ENCODE measurements at regions of chr7 and their contacts with region 1.

Region 1: DNA sequence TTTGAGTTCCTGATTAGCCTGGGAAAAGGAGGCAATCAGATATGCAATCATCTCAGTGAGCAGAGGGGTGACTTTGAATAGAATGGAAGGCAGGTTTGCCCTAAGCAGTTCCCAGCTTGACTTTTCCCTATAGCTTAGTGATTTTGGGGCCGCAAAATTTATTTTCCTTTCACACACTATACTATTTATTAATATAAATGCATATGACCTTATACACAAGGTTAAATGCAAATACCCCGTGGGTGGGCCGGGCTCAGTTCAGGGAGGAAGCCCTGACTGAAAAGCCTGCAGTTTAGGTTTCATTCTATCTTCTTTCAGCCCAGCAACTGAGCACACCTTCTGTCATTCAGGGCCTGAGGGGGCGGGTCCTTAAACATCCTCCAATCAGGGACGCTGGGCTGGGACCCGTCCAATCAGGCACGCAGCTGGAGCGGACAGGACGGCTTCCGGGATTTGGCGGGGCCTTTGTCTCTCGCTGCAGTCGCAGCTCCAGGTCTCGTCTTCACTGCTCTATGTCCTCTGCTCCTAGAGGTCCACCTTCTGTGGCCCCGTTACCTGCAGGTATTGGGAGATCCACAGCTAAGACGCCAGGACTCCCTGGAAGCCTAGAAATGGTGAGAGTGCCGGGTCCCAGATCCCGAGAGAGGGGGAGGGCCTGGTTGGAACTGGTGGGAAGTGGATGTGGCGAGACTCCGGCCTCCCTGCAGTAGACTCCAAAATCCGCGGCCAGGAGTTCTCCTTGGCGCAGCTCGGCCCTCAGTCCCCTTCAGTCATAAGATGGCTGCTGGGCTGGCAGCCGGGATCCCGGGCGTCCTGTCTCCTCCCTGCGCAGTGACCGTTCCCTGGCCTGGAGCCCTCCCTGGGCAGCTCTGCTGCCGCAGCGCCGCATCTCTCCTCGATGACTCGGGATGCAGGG is at the start of gene ZNF273:
- DNase-seq: peak; percentile 72
- ATAC-seq: peak; percentile 100
- H3K4me3 Mint-ChIP-seq: peak within 1 kb of the TSS; percentile 97
- H3K27ac Mint-ChIP-seq: peak within 1 kb of the TSS; percentile 91
- H3K4me1 Mint-ChIP-seq: peaks cover 52% of the 10 kb centered on the region
- H3K27me3 Mint-ChIP-seq: no peaks in the 10 kb centered on the region
- CTCF ChIP-seq: no peak
- total RNA-seq, gene ZNF273: 10.6 and 12.3 TPM in 2 replicates

Region 2: GRCh38 chr7:63900394-63901203 is 1002.5 kb before region 1 on chr7:
- CTCF ChIA-PET with region 1: no interaction called
- POLR2A ChIA-PET with region 1: no interaction called
- intact Hi-C with region 1: loop called (anchors 1 kb)
- DNase-seq: peak; percentile 61
- ATAC-seq: peak; percentile 92
- H3K4me3 Mint-ChIP-seq: peak overlapping the region; percentile 96
- H3K27ac Mint-ChIP-seq: peak overlapping the region; percentile 95
- H3K4me1 Mint-ChIP-seq: peaks cover 2% of the 10 kb centered on the region
- H3K27me3 Mint-ChIP-seq: no peaks in the 10 kb centered on the region
- CTCF ChIP-seq: no peak

Region 3: DNA sequence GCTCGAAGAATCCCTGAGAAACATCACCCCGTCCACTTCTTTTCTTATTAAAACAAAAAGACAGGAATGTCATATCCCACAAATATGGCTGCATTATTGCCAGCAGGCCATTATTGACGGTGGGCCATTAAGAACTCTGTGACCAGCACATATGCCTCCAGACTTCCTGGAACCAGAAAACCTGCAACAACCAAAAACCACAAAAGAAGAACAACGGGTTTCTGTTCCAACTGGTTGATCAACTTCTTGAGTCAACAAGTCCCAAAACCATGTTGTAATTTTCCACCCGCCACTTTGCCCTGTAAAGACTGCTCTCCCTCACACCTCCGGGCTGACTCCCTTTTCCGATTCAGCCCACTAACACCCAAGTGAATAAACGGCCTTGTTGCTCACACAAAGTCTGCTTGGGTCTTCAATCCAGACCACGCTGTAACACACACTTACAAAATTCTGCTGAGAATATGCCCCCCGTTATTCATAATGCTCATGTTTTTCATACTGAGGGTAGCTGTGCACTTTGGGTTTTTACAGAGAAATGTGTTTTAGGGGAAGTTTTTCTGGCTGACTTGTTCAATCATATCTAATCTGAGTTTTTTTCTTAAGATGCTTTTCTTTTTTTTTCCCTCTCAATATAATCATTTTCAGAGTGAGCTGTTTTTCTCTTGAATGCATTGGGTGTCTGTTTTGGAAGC is 216.4 kb before region 1 on chr7:
- CTCF ChIA-PET with region 1: no interaction called
- POLR2A ChIA-PET with region 1: no interaction called
- intact Hi-C with region 1: loop called (anchors 5 kb)
- DNase-seq: peak; percentile 29
- ATAC-seq: peak; percentile 84
- H3K4me3 Mint-ChIP-seq: peak overlapping the region; percentile 79
- H3K27ac Mint-ChIP-seq: peak overlapping the region; percentile 99
- H3K4me1 Mint-ChIP-seq: peaks cover 70% of the 10 kb centered on the region
- H3K27me3 Mint-ChIP-seq: no peaks in the 10 kb centered on the region
- CTCF ChIP-seq: no peak

Region 4: GRCh38 chr7:64887756-64888508 is 15.1 kb before region 1 on chr7:
- CTCF ChIA-PET with region 1: interaction called, 3 read pairs
- POLR2A ChIA-PET with region 1: interaction called, 4 read pairs
- intact Hi-C with region 1: loop called (anchors 1 kb)
- DNase-seq: peak; percentile 33
- ATAC-seq: peak; percentile 72
- H3K4me3 Mint-ChIP-seq: peak overlapping the region; percentile 86
- H3K27ac Mint-ChIP-seq: no peak overlapping the region
- H3K4me1 Mint-ChIP-seq: peaks cover 13% of the 10 kb centered on the region
- H3K27me3 Mint-ChIP-seq: peaks cover 52% of the 10 kb centered on the region
- CTCF ChIP-seq: no peak

Region 5: DNA sequence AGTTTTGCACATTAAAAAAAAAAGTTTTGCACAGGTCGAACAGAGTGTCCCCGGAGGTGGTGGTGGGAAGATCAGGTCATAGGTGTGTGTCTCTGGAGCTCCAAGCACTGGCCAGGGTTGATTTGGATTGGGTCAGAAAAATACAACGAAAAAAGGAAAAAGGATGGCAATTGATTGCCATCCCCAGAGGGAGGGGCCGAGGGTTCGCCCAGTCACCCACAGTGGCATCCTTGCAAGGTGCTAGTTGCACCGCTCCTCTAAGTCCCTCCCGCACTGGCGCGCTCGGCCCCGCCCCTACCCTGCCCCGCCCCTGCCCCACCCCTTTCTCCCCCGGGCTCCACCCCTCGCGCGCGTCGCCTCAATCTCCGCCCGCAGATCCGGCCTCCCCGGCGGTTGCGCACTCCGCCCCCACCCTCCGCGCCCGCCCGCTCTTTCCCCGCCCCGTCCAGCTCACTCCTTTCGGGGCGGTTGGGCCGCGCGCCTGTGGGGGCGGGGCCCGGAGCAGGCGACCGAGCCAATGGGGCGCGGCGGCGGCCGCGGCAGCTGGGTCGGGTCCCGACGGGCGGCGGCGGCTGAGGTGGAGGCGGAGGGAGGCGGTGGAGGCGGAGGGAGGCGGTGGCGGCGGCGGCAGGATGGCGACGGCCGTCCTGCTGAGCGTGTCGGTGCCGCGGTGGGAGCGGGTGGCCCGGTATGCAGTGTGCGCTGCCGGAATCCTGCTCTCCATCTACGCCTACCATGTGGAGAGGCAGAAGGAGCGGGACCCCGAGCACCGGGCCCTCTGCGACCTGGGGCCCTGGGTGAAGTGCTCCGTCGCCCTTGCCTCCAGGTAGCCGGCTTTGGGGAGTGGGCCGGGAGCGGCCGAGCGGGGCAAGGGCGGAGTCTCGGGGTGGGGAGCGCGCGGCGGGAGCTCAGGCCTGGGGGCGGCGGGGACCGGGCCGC is 134.9 kb after region 1 on chr7:
- CTCF ChIA-PET with region 1: no interaction called
- POLR2A ChIA-PET with region 1: no interaction called
- intact Hi-C with region 1: loop called (anchors 1 kb)
- DNase-seq: peak; percentile 61
- ATAC-seq: peak; percentile 94
- H3K4me3 Mint-ChIP-seq: peak overlapping the region; percentile 75
- H3K27ac Mint-ChIP-seq: peak overlapping the region; percentile 65
- H3K4me1 Mint-ChIP-seq: peaks cover 8% of the 10 kb centered on the region
- H3K27me3 Mint-ChIP-seq: no peaks in the 10 kb centered on the region
- CTCF ChIP-seq: no peak